ENCODE measurements at regions of chr17 and their contacts with region 1.

Region 1: DNA sequence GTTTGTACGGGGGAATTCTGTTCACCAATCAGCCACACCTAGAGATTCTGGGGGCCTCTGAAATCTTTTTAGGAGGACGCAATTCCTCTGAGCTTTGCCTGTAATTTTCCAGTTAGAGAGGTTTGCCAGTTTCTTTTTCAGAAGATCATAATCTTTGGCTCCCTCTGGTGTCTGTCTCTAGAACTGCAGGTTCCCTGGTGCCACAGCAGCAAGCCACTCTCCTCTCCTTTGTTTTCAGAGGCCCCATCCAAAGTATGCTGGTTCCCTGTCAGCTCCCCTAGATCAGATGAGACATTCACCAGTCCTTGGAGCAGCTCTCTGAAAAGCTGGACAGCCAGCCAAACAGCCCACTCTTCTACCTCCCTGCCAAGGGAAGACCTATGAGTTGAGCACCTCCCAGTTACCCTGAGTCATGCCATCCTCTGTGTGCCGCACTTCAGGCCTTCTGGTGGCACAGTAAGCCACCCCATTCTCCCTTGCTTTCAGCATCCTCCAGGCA is 36.1 kb downstream of the RNF112 start:
- DNase-seq: peak; percentile 58
- H3K4me3 Mint-ChIP-seq: no peak overlapping the region
- H3K27ac Mint-ChIP-seq: peak overlapping the region; percentile 4
- H3K4me1 Mint-ChIP-seq: peaks cover 3% of the 10 kb centered on the region
- H3K27me3 Mint-ChIP-seq: peaks cover 12% of the 10 kb centered on the region

Region 2: GRCh38 chr17:19377602-19378392 is 69.3 kb before region 1 on chr17:
- CTCF ChIA-PET with region 1: interaction called, 10 read pairs
- POLR2A ChIA-PET with region 1: no interaction called
- intact Hi-C with region 1: no loop called
- DNase-seq: peak; percentile 98
- H3K4me3 Mint-ChIP-seq: peak overlapping the region; percentile 97
- H3K27ac Mint-ChIP-seq: peak overlapping the region; percentile 99
- H3K4me1 Mint-ChIP-seq: peaks cover 16% of the 10 kb centered on the region
- H3K27me3 Mint-ChIP-seq: no peaks in the 10 kb centered on the region

Region 3: DNA sequence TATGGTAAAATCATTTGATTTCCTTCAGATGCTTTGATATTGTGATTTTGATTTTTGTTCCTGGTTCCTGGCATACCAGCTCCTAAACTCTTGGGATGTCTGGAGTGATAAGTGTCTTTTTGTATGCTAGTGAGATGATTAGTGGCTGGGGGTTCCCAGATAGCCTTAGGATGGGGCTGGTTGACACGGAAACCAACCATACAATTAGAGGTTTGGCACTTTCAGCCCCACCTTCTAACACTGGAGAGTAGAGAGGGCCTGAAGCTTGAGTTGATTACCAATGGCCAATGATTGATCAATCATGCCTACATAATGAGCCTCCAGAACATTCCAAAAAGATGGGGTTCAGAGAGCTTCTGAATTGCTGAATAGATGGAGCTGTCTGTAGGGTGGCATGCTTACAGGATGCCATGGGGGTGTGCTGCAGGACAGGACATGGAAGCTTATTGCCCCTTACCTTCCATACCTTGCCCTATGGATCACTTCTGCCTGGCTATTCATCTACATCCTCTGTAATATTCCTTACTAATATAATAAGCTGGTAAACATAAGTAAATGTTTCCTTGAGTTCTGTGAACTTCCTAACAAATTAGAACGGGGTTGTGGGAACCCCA is 13.3 kb before region 1 on chr17:
- CTCF ChIA-PET with region 1: interaction called, 12 read pairs
- POLR2A ChIA-PET with region 1: no interaction called
- intact Hi-C with region 1: no loop called
- DNase-seq: no peak
- H3K4me3 Mint-ChIP-seq: no peak overlapping the region
- H3K27ac Mint-ChIP-seq: no peak overlapping the region
- H3K4me1 Mint-ChIP-seq: no peaks in the 10 kb centered on the region
- H3K27me3 Mint-ChIP-seq: no peaks in the 10 kb centered on the region

Region 4: DNA sequence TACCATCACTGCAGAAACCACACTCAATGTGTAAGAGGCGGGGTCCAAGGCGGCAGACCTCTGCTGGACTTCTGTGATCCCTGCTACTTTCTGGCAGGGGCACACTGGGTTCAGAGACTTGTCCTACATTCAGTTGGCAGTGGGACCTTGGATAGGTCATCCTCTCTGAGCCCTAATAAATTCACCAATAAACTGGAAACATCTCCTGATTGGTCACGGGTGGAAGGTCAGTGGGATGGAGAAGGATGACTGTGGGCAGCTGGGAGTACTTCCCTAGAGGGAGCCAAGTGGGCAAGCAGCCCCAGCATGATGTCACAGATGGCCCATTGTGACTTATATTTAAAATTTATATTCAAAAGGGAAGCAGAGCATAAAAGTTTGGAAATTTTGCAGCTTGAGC is 13.6 kb after region 1 on chr17:
- CTCF ChIA-PET with region 1: interaction called, 14 read pairs
- POLR2A ChIA-PET with region 1: no interaction called
- intact Hi-C with region 1: no loop called
- DNase-seq: no peak
- H3K4me3 Mint-ChIP-seq: no peak overlapping the region
- H3K27ac Mint-ChIP-seq: no peak overlapping the region
- H3K4me1 Mint-ChIP-seq: peaks cover 43% of the 10 kb centered on the region
- H3K27me3 Mint-ChIP-seq: peaks cover 1% of the 10 kb centered on the region